ENCODE measurements at regions of chr5 and their contacts with region 1.

Region 1: DNA sequence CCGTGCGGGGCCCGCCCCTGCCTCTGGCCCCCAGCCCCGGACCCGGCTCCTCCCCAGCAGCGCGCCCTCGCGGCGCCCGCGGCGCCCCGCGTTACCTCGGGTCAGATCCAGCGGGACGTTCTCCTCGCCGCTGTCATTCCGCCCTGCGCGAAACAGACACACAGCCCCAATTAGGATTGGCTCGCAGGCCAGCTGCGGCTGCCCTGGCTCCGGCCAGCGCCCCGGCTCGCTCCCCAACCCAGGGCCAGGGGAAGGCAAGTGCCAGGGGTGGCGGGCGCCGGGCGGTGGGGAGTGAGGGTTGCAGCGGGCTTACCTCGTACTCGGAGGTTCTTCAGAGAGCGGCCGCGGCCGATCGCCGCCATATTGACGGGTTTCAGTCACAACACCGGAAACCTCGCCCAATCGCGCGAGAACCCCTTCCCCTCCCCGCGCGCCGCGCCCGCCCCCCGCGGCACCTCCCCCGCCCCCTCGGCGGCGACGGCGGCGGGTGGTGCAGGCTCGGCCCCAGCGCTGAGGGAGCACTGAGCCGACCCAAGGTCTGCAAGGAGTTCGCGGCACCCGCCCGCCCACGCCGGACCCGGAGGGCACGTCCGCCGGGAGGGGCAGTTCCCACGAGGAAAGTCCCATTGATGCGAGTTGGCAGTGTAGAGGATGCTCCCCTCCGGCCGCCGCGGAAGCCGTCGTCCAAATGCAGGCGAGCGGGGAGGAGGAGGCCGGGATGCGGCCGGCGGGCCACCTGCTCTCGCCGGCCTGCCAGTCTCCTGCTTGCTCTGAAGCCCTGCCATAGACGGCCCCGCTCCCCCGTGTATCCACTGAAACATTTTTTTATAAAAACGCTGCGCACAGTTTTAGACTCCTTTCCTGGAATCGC is at the start of gene RICTOR:
- DNase-seq: peak; percentile 83 to 96 (median 93)

Region 2: GRCh38 chr5:38994324-38994927 is 79.8 kb before region 1 on chr5:
- intact Hi-C with region 1: loop called (anchors 5 kb)
- DNase-seq: peak in 19 of 42 donors; percentile 13 to 75 (median 41)

Region 3: GRCh38 chr5:39452846-39453245 is 378.6 kb after region 1 on chr5:
- intact Hi-C with region 1: no loop called
- DNase-seq: no peak